ENCODE measurements at regions of chr4 and their contacts with region 1.

Region 1: DNA sequence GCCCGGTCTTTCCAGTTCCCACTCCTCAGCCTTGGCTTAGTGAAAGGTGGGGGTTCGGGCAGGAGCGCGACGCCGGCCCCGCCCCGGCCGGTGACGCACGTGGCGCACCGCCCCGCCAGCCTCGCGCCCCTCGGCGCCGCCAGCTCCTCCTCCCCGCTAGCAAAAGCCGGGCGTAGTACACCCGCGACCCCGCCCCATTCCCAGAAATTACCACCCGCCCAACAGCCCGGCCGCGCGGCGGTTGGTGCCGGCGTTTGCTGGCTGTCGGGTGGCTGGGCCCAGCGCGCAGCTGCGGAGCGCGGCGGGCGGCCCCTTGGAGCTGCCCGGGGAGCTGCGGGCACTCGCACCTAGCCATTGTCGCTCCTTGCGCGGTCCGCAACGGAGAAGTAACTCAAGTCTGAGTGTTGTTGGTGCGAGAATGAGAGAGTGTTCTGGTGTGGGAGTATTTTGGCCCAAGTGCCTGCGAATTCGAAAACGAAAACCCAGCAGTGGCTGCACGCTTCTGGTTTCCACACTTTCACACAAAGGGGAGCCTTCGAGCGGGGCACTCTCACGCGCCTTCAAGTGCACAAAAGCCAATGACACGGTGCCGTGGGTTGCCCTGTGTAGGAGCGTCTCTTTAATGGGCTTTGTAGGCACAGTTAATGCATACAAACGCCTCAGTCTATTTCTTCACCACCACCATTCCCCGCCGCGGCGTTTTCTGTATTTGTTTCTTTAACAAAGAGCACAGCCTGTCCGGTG is 1.0 kb upstream of the ELF2 start:
- DNase-seq: peak; percentile 93
- H3K4me3 ChIP-seq: peak overlapping the region; percentile 72 to 84 (median 80)
- H3K27ac ChIP-seq: peak overlapping the region; percentile 78
- H3K4me1 ChIP-seq: peaks cover 5% of the 10 kb centered on the region
- H3K27me3 ChIP-seq: no peaks in the 10 kb centered on the region
- CTCF ChIP-seq: no peak

Region 2: GRCh38 chr4:139015269-139015947 is 162.6 kb before region 1 on chr4 and contains the start of gene NOCT:
- CTCF ChIA-PET with region 1: no interaction called
- dilution Hi-C with region 1: no loop called
- in situ Hi-C with region 1: no loop called
- intact Hi-C with region 1: loop called (anchors 5 kb)
- DNase-seq: peak; percentile 93
- H3K4me3 ChIP-seq: peak within 1 kb of the TSS; percentile 53 to 100 (median 91)
- H3K27ac ChIP-seq: peak within 1 kb of the TSS; percentile 97
- H3K4me1 ChIP-seq: peaks cover 39% of the 10 kb centered on the region
- H3K27me3 ChIP-seq: no peaks in the 10 kb centered on the region
- CTCF ChIP-seq: no peak
- total RNA-seq, gene NOCT: 20.6 to 34.8 TPM

Region 3: DNA sequence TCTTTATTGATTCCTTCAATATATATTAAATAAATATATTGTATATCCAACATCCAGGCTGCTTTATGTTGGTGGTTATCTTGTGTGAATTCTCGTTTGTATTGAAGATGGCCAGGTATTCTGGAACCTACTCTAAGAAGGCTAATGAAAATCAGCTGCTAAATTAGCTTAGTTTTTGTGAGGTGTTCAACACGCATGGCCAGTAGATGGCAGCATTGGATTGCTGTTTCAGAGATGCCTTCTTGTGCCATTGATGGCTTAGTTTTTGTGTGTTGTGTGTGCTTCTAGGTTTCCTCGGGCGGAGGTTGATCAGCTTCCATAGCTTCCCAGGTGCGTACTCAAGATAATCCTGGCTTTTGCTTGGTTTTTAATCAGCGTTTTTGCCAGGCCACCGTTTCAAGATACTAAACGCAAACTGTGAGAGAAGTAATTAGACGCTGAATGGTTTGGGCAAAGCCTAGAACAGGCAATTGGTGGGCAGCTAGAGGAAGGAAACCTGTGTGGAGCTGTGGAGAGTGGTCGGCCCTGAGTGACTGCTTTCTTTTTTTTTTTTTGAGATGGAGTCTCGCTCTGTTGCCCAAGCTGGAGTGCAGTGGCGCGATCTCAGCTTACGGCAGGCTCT is 147.3 kb before region 1 on chr4:
- CTCF ChIA-PET with region 1: no interaction called
- dilution Hi-C with region 1: no loop called
- in situ Hi-C with region 1: no loop called
- intact Hi-C with region 1: loop called (anchors 1 kb)
- DNase-seq: peak; percentile 66
- H3K4me3 ChIP-seq: no peak overlapping the region
- H3K27ac ChIP-seq: no peak overlapping the region
- H3K4me1 ChIP-seq: no peaks in the 10 kb centered on the region
- H3K27me3 ChIP-seq: no peaks in the 10 kb centered on the region
- CTCF ChIP-seq: peak; percentile 82 to 93

Region 4: GRCh38 chr4:139099366-139099982 is 78.6 kb before region 1 on chr4:
- CTCF ChIA-PET with region 1: no interaction called
- dilution Hi-C with region 1: no loop called
- in situ Hi-C with region 1: no loop called
- intact Hi-C with region 1: loop called (anchors 1 kb)
- DNase-seq: peak; percentile 70
- H3K4me3 ChIP-seq: no peak overlapping the region
- H3K27ac ChIP-seq: no peak overlapping the region
- H3K4me1 ChIP-seq: no peaks in the 10 kb centered on the region
- H3K27me3 ChIP-seq: no peaks in the 10 kb centered on the region
- CTCF ChIP-seq: peak; percentile 88 to 93

Region 5: DNA sequence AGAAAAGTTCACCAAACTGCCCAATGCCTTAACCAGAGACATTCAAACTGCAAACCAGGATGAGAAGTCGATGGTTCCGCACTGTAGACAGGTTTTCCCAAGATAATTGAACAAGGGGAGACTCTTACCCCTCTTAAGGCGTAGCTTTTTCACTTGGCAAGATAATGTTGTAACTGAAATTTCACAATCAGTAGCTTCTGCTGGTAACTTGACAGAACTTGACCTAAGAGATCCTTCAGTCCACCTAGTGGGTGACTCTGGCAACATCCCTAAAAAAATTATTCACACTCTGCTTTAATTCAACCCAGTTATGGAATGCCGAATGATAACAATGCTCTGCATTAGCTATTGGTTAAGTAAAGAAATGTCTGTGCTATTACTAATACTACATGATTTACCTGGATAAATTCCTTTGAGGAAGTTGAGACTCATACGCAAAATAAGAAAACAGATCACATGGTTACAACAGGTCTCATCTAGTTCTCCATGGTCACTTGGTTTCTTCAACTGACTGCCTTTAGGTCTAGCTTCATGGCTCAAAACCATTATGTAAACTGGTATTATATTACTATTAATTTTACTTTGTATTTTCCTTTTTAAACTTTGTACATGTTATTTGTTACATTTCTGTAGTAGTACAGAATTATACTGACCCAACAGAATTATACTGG is 10.1 kb before region 1 on chr4:
- CTCF ChIA-PET with region 1: no interaction called
- dilution Hi-C with region 1: no loop called
- in situ Hi-C with region 1: no loop called
- intact Hi-C with region 1: no loop called
- DNase-seq: peak; percentile 94
- H3K4me3 ChIP-seq: peak overlapping the region in 1 of 3 experiments; percentile 20
- H3K27ac ChIP-seq: peak overlapping the region; percentile 97
- H3K4me1 ChIP-seq: peaks cover 24% of the 10 kb centered on the region
- H3K27me3 ChIP-seq: no peaks in the 10 kb centered on the region
- CTCF ChIP-seq: peak; percentile 55 to 75

Region 6: DNA sequence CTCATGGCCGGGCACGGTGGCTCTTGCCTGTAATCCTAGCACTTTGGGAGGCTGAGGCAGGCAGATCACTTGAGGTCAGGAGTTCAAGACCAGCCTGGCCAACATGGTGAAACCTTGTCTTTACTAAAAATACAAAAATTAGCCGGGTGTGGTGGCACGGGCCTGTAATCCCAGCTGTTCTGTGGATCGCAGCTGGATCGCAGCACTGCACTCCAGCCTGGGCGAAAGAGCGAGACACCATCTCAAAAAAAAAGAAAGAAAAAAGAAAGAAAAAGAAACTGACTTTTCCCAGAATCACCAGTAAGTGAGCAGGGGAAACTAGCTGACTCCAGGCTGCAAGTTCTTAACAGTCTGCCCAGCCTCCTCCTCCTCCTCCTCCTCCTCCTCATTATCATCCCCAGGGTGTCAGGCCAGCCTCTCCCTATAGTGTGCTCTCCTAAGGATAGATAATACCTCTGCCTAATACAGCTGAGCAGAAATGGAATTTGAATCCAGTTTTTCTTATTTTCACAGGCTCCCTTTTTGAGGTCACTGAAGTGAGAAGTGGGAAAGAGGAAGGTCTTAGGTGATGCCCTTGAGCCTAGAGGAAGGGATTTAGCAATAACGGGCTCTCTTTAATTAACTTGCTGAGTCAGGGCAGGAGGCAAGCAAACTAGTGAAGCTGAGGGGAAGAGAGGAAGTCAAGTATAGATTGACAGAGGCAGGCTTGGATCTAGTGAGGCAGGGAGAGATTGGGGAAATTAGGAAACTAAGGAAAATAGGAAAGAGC is 10.8 kb after region 1 on chr4:
- CTCF ChIA-PET with region 1: no interaction called
- dilution Hi-C with region 1: no loop called
- in situ Hi-C with region 1: no loop called
- intact Hi-C with region 1: no loop called
- DNase-seq: no peak
- H3K4me3 ChIP-seq: no peak overlapping the region
- H3K27ac ChIP-seq: no peak overlapping the region
- H3K4me1 ChIP-seq: no peaks in the 10 kb centered on the region
- H3K27me3 ChIP-seq: no peaks in the 10 kb centered on the region
- CTCF ChIP-seq: no peak

Region 7: GRCh38 chr4:139229534-139230039 is 51.5 kb after region 1 on chr4:
- CTCF ChIA-PET with region 1: no interaction called
- dilution Hi-C with region 1: no loop called
- in situ Hi-C with region 1: no loop called
- intact Hi-C with region 1: loop called (anchors 5 kb)
- DNase-seq: peak; percentile 47
- H3K4me3 ChIP-seq: no peak overlapping the region
- H3K27ac ChIP-seq: no peak overlapping the region
- H3K4me1 ChIP-seq: no peaks in the 10 kb centered on the region
- H3K27me3 ChIP-seq: no peaks in the 10 kb centered on the region
- CTCF ChIP-seq: peak; percentile 73 to 75

Region 8: DNA sequence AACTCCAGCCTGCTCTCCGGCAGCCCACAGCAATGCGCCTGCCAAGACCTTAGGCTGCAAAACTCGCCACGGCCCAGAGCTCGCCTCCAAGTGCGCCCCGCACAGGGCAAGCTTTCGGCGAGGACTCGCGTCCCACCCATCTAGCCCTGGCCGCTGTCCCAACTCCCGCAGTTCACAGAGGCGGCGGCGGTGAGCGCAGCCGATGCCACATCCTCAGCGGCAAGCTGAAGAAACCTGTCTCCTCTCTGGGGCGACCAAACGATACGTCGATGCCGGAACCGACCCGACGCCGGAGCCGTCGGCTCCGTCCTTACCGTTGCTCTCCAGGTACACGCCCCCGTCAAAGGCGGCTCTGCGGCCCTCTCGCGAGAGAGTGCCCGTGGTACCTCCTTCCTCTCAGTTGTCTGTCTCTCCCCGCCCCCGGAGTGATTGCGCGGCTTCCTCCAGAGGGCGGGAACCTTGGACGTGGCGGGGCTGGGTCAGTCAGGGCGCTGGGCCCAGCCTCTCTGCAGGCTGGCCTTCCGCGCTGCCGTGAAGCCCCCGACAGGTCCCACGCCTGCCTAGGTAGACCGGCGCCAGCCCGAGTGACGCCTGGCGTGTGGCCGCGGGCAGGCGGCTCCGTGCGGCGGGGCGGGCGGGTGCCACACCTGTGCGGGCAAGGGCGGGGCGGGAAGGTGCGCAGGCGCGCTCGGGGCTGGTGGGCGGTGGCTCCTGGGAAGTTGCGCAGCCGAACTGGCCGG is 275.5 kb after region 1 on chr4:
- CTCF ChIA-PET with region 1: no interaction called
- dilution Hi-C with region 1: no loop called
- in situ Hi-C with region 1: no loop called
- intact Hi-C with region 1: loop called (anchors 5 kb)
- DNase-seq: peak; percentile 97
- H3K4me3 ChIP-seq: peak overlapping the region; percentile 65 to 97 (median 84)
- H3K27ac ChIP-seq: peak overlapping the region; percentile 75
- H3K4me1 ChIP-seq: peaks cover 14% of the 10 kb centered on the region
- H3K27me3 ChIP-seq: no peaks in the 10 kb centered on the region
- CTCF ChIP-seq: no peak

Region 9: DNA sequence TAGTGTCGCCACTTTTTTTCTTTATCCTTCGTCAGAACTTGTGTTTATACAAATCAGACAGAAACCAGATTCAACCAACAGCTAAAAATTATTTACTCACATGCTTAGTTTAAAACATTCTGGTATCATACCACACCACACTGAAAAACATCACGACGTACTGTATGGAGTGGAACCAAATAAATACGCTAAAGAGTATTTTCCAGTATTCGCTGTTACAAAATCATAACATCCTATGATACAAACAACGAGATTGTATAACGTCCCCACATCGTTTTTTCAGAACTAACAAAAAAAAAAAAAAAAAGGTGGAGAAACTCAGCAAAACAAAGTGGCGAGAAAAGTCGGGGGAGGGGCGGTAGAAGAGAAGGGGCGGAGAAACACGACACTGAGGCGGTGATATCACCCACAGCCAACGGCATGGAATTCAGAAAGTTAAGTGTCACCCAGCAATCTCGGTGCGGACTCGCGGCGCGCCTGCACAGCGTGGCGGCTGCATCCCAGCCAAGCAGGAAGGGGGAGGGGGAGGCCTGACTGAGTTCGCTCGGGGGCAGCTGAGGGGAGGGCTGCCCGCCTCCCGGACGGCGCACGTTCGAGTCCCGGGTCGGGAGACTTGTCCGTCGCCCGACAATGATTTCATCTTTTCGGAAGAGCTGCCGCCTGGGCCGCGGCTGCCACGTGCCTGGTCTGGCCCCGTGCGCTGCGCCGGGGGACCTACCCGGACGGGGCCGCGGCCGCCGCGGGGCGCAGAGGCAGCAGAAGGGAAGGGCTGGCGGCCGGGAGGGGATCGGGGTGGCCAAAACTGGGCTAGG is 377.1 kb after region 1 on chr4:
- CTCF ChIA-PET with region 1: no interaction called
- dilution Hi-C with region 1: no loop called
- in situ Hi-C with region 1: no loop called
- intact Hi-C with region 1: loop called (anchors 10 kb)
- DNase-seq: peak; percentile 81
- H3K4me3 ChIP-seq: peak overlapping the region; percentile 77 to 91 (median 90)
- H3K27ac ChIP-seq: peak overlapping the region; percentile 63
- H3K4me1 ChIP-seq: peaks cover 17% of the 10 kb centered on the region
- H3K27me3 ChIP-seq: peaks cover 5% of the 10 kb centered on the region
- CTCF ChIP-seq: no peak

Region 10: DNA sequence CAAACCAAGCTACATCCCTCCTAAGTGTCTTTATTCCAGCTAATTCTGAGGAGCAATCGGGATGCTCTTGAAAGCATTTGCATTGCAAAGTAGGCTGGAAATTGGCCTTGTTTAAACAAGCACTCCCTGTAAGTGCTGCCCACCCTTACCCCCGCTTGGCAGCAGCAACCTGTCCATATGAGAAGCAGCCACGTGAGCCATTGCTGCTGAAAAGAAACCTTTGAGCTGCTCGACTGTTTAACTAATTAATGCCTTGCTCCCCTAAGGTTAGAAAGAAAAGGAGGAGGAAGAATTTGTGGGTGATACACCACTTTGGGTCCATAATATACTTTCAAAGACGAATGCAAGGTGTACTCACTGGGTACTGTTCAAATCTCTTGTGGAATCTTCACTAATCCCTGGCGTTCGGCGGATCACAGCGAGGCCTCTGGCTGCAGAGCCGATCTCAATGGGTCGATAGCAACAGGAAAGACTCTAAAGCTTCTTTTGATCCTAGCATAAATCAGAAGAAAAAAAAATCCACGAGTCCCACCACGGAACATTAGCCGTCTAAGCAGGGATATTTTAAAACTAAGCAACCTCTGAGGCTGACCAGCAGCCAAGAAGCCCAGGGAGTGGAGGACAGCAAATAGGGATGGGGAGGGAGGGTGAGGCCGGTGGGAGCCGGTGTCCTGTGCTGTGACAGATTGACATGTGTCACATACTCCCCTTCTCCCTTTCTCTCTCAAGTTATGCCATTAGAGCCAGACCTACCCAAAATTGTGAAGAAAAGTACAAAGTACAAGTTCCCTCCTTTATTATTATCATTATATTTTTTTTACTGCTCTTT is 450.4 kb after region 1 on chr4:
- CTCF ChIA-PET with region 1: no interaction called
- dilution Hi-C with region 1: no loop called
- in situ Hi-C with region 1: no loop called
- intact Hi-C with region 1: no loop called
- DNase-seq: no peak
- H3K4me3 ChIP-seq: no peak overlapping the region
- H3K27ac ChIP-seq: no peak overlapping the region
- H3K4me1 ChIP-seq: no peaks in the 10 kb centered on the region
- H3K27me3 ChIP-seq: no peaks in the 10 kb centered on the region
- CTCF ChIP-seq: no peak